ENCODE measurements at regions of chr19 and their contacts with region 1.

Region 1: GRCh38 chr19:7442423-7442822 is 46.4 kb downstream of the PEX11G start:
- DNase-seq: peak in 6 of 10 donors; percentile 9 to 66 (median 46)
- H3K4me3 ChIP-seq: peak overlapping the region in 12 of 59 donors; percentile 5 to 46 (median 20)
- H3K27ac ChIP-seq: peak overlapping the region in 57 of 59 donors; percentile 17 to 96 (median 83)
- H3K27me3 ChIP-seq: no peaks in the 10 kb centered on the region
- CTCF ChIP-seq: no peak

Region 2: DNA sequence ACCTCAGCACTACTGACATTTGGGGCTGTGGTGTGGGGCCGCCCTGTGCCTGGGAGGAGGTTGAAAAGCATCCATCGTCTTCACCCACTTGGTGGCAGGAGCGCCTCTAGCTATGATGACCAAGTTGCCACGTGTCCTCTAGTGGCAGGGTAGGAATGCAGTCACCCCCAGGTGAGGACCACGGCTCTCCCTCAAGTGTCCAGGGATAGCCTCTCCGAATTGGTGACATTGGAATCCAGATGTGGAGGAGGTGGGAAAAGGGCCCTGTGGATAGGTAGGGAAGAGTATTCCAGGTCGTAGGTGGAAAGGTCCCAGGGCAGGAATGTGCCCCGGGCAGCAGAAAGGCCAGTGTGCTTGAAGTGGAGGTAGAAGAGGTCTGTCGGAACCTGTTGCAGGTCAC is 56.1 kb before region 1 on chr19:
- intact Hi-C with region 1: no loop called
- DNase-seq: no peak
- H3K4me3 ChIP-seq: no peak overlapping the region
- H3K27ac ChIP-seq: no peak overlapping the region
- H3K27me3 ChIP-seq: no peaks in the 10 kb centered on the region
- CTCF ChIP-seq: peak in 1 of 56 donors; percentile 10

Region 3: GRCh38 chr19:7471696-7472615 is 29.5 kb after region 1 on chr19:
- intact Hi-C with region 1: no loop called
- DNase-seq: no peak
- H3K4me3 ChIP-seq: no peak overlapping the region
- H3K27ac ChIP-seq: peak overlapping the region in 1 of 59 donors; percentile 36
- H3K27me3 ChIP-seq: no peaks in the 10 kb centered on the region
- CTCF ChIP-seq: no peak

Region 4: GRCh38 chr19:7482584-7483439 is 40.4 kb after region 1 on chr19:
- intact Hi-C with region 1: loop called in 1 of 2 experiments (anchors 5 kb)
- DNase-seq: no peak
- H3K4me3 ChIP-seq: no peak overlapping the region
- H3K27ac ChIP-seq: peak overlapping the region in 4 of 59 donors; percentile 17 to 36 (median 30)
- H3K27me3 ChIP-seq: no peaks in the 10 kb centered on the region
- CTCF ChIP-seq: no peak

Region 5: DNA sequence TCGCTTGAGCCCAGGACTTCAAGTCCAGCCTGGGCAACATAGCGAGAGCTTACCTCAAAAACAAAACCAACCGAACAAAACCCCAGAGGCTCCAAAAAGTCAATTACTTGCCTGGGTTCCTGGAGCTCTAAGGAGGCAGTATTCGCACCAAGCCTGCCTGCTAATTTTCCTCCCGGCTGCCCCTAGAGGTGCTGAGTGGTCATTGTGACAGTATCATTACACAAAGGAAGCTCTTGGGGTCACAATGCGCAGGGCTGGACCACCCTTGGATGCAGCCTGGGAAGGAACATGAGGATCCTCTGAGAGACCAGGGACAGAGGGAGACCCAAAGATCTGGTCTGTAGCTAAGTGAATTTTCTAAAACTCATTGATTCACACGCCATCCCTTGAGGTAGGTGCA is 54.9 kb after region 1 on chr19:
- intact Hi-C with region 1: loop called (anchors 5 kb)
- DNase-seq: peak in 1 of 10 donors; percentile 29
- H3K4me3 ChIP-seq: no peak overlapping the region
- H3K27ac ChIP-seq: peak overlapping the region in 50 of 59 donors; percentile 0 to 100 (median 91)
- H3K27me3 ChIP-seq: no peaks in the 10 kb centered on the region
- CTCF ChIP-seq: peak in 39 of 56 donors; percentile 17 to 61 (median 38)